Adrenal gland (tissue), 19 donors: ENCODE measurements at regions of chr10 and their contacts with region 1.

Region 1: DNA sequence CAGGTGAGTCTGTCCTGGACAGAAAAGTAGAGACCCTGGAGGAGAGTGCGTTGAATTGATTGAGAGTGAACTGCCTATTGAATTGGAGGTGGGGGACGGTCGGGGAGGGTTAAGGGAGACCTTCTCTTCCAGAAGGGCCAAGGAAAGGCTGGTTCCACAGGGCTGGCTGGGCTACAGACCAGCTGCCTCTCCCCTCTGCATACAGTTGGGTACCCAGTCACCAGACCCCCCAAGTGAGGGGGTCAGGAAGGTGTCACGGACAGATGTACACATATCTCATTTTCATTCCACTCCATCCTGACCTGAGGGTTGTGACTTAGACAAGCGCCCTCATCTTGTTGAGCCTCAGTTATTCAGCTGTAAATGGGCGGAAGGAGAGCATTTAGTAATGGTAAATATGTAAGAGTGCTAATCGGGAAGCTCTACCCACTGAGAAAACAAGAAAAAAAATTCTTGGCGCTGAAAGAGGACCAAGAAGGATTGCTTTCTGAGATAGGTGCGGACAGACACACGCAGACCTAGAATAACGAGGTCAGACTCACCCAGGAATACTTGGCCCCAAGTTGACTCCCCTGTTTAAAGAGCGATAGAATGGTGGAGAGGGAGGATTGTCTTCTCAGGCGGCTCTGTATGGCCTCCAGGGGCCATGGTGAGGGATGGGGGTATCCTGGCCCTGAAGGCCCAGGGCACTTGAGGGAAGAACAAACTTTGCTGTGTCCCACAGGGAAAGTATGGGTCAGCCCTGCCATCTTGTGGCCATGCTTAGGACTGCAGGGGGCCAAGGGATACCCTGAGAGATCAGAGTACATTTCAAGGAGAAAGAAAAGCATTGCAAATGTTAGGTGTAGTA is 7.2 kb upstream of the MBL2 start:
- DNase-seq: peak; percentile 56 to 83 (median 67)
- H3K4me3 ChIP-seq: no peak overlapping the region
- H3K27ac ChIP-seq: no peak overlapping the region
- H3K4me1 ChIP-seq: no peaks in the 10 kb centered on the region
- H3K27me3 ChIP-seq: no peaks in the 10 kb centered on the region
- CTCF ChIP-seq: peak; percentile 77 to 93 (median 88)
- POLR2A ChIP-seq: no peak

Region 2: GRCh38 chr10:52740913-52741675 is 38.7 kb before region 1 on chr10:
- intact Hi-C with region 1: loop called in 1 of 2 experiments (anchors 5 kb)
- DNase-seq: peak; percentile 20 to 69 (median 39)
- H3K4me3 ChIP-seq: no peak overlapping the region
- H3K27ac ChIP-seq: no peak overlapping the region
- H3K4me1 ChIP-seq: no peaks in the 10 kb centered on the region
- H3K27me3 ChIP-seq: no peaks in the 10 kb centered on the region
- CTCF ChIP-seq: peak; percentile 54 to 80 (median 73)
- POLR2A ChIP-seq: no peak